Tibial artery (tissue), 4 donors: ENCODE measurements at regions of chr5 and their contacts with region 1.

Region 1: DNA sequence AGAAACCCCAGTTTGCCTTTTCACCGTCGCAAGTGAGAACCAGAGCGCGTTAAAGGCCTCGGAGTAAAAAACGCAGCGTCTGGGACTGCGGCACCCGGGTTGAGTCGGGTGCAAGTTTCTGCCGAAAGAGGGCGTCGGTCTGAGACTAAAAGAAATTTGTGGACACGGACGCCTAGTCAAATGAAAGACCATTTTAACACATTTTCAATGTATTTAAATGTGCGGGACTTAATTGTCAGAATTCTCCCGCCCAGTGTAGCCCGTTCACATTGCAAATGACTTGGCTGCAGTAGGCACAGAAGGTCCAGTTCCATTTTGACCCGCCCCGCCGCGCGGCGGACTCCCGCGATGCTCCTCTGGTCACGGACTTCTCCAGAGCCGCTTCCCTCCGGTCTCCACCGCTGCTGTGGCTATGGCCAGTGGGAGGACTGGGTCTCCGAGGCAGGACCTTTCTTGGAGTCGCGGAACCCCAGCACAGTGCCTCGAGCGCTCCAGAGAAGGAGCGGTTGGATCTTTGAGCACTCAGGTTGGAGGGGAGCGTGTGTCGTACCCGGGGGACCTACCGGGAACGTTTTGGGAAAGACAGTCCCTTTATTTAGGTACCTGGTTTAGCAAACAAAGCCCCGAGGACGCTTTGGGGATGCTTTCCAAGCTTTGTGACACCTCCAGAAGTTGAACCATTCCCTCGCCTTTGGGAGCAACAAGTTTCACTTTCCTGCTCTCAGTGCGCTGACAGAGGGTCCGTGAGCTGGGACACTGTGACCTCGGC is 1.2 kb upstream of the NPR3 start:
- DNase-seq: peak; percentile 59 to 87
- H3K4me3 ChIP-seq: peak overlapping the region; percentile 76 to 78
- H3K27ac ChIP-seq: peak overlapping the region; percentile 77 to 95
- H3K4me1 ChIP-seq: peaks cover 0 to 25% (median 7%) of the 10 kb centered on the region in 4 donors
- H3K27me3 ChIP-seq: no peaks in the 10 kb centered on the region
- CTCF ChIP-seq: peak; percentile 75 to 78

Region 2: DNA sequence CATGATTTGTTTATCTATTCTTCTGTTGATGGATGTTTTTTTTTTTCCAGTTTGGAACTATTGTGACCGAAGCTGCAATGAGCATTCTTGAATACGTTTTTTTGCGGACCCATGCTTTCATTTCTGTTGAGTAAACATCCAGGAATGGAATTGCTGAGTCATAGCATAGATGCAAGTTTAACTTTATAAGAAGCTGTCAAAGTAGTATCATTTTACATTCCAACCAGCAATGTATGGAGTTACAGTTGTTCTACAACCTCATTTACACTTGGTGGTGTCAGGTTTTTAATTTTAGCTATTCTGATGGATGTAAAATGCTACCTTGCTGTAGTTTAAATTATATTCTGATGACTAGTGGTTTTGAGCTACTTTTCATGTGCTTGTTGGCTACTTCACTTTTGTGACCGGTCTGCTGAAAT is 50.1 kb after region 1 on chr5:
- intact Hi-C with region 1: loop called (anchors 5 kb)
- DNase-seq: no peak
- H3K4me3 ChIP-seq: peak overlapping the region; percentile 24 to 40
- H3K27ac ChIP-seq: peak overlapping the region; percentile 23 to 58
- H3K4me1 ChIP-seq: peaks cover 0 to 14% (median 3%) of the 10 kb centered on the region in 4 donors
- H3K27me3 ChIP-seq: no peaks in the 10 kb centered on the region
- CTCF ChIP-seq: no peak

Region 3: GRCh38 chr5:32852535-32852934 is 142.6 kb after region 1 on chr5:
- intact Hi-C with region 1: loop called (anchors 5 kb)
- DNase-seq: peak in 1 of 2 donors; percentile 70
- H3K4me3 ChIP-seq: peak overlapping the region in 1 of 2 donors; percentile 7
- H3K27ac ChIP-seq: peak overlapping the region; percentile 47 to 70
- H3K4me1 ChIP-seq: peaks cover 0 to 28% (median 9%) of the 10 kb centered on the region in 4 donors
- H3K27me3 ChIP-seq: no peaks in the 10 kb centered on the region
- CTCF ChIP-seq: peak; percentile 49 to 56

Region 4: GRCh38 chr5:32916648-32917047 is 206.7 kb after region 1 on chr5:
- intact Hi-C with region 1: loop called (anchors 10 kb)
- DNase-seq: peak in 1 of 2 donors; percentile 65
- H3K4me3 ChIP-seq: no peak overlapping the region
- H3K27ac ChIP-seq: no peak overlapping the region
- H3K4me1 ChIP-seq: no peaks in the 10 kb centered on the region
- H3K27me3 ChIP-seq: no peaks in the 10 kb centered on the region
- CTCF ChIP-seq: peak; percentile 49 to 69

Region 5: GRCh38 chr5:33180900-33181299 is 470.9 kb after region 1 on chr5:
- intact Hi-C with region 1: loop called (anchors 10 kb)
- DNase-seq: no peak
- H3K4me3 ChIP-seq: no peak overlapping the region
- H3K27ac ChIP-seq: no peak overlapping the region
- H3K4me1 ChIP-seq: no peaks in the 10 kb centered on the region
- H3K27me3 ChIP-seq: no peaks in the 10 kb centered on the region
- CTCF ChIP-seq: peak in 1 of 2 experiments; percentile 34

Region 6: GRCh38 chr5:33423018-33423630 is 713.2 kb after region 1 on chr5:
- intact Hi-C with region 1: loop called (anchors 10 kb)
- DNase-seq: no peak
- H3K4me3 ChIP-seq: no peak overlapping the region
- H3K27ac ChIP-seq: no peak overlapping the region
- H3K4me1 ChIP-seq: no peaks in the 10 kb centered on the region
- H3K27me3 ChIP-seq: no peaks in the 10 kb centered on the region
- CTCF ChIP-seq: peak; percentile 48 to 50